H1 (cell line): ENCODE measurements at regions of chr12 and their contacts with region 1.

Region 1: DNA sequence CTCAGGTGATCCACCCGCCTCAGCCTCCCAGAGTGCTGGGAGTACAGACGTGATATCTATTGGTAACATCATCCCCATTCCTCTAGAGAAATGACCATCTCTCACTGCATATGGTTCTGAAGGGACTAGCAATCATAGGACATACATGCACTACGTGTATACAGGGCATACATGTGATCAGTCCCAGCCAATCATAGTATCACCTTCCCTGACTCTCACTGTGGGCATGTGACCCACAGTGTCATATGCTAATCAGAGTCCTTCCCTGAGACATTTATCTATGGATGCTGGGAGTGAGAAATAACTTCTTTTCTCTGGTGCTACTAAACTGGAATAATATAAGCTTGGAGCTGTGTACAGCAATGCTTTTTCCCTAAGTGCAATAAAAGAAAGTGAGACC is 12.1 kb upstream of the FBXW8 start:
- DNase-seq: no peak
- H3K4me3 ChIP-seq: no peak overlapping the region
- H3K27ac ChIP-seq: no peak overlapping the region
- H3K4me1 ChIP-seq: no peaks in the 10 kb centered on the region
- H3K27me3 ChIP-seq: no peaks in the 10 kb centered on the region
- CTCF ChIP-seq: no peak
- EP300 ChIP-seq: no peak
- POLR2A ChIP-seq: no peak
- RAD21 ChIP-seq: no peak

Region 2: GRCh38 chr12:116910645-116911451 is 12.2 kb after region 1 on chr12 and contains the start of gene FBXW8:
- CTCF ChIA-PET with region 1: interaction called, 10 read pairs
- POLR2A ChIA-PET with region 1: interaction called, 5 read pairs
- DNase-seq: peak in 1 of 2 experiments; percentile 87
- H3K4me3 ChIP-seq: peak within 1 kb of the TSS; percentile 55 to 65 (median 63)
- H3K27ac ChIP-seq: peak within 1 kb of the TSS; percentile 39; the same call in 1 of the 2 replicates
- H3K4me1 ChIP-seq: no peaks in the 10 kb centered on the region; a peak in 1 of 7 replicates
- H3K27me3 ChIP-seq: no peaks in the 10 kb centered on the region
- CTCF ChIP-seq: no peak
- EP300 ChIP-seq: no peak
- POLR2A ChIP-seq: peak; percentile 17 to 46; a peak in 2 of 3 replicates
- RAD21 ChIP-seq: no peak
- total RNA-seq, gene FBXW8: 15.9 and 16.0 TPM in 2 replicates